GM13977 (cell line): ENCODE measurements at regions of chr4 and their contacts with region 1.

Region 1: DNA sequence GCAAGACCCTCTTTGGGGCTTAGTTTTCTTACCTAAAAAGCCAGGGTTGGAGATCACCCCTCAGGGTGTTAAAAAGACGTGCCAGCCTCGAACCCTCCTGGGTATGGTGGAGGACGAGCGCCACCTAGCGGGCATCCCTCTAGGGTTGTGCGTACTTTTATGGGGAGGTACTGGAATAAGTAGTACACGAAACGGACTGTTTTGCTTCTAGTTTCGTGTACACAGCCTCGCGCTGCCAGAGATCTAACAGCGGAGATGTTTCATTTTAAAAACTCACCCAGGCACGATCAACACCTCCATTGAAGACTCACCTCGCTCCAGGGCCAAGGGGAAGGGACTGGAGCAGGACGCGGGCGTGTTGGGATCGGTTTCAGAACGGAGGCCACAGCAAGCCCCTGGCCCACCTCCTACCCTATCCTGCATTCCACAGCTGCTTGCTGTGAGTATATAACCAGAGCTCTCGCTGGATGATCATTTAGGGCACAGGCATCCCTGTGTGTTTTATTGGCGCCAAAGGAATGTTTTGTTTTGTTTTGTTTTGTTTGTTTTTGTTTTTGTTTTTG is 4.8 kb upstream of the NKX3-2 start:
- DNase-seq: peak; percentile 91
- CTCF ChIP-seq: peak; percentile 83

Region 2: DNA sequence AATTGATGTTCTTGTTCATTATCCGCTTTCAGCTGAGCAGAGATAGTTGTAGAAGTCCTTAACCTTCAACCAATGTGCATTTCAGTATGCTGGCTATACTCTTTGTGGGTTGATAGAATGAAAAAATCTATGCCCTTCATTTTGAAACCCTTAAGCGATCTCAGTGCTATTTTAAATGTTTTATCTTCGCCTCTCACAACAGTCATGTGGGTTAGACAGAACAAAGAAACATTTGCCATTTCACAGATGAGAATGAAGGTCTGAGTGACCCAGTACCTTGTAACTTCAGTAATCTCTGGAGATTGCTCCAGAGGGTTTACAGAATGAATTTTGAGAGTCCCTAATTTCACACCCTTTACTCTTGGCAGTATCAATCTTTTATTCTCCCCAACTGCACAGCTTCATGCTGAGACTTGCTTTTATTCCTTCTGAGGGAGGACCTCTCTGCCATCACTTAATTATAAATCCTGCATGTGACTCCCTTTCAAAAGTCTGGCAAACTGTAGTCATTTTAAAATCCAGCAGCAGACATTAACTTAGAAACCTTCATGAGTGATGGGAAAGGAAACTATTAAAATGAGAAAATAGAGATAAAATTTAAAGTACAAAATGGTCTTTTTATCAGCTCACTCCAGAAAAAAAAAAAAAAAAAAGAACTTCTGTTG is 986.5 kb before region 1 on chr4:
- in situ Hi-C with region 1: no loop called
- DNase-seq: no peak
- CTCF ChIP-seq: no peak

Region 3: GRCh38 chr4:12734586-12734985 is 814.5 kb before region 1 on chr4:
- in situ Hi-C with region 1: loop called (anchors 10 kb)
- DNase-seq: no peak
- CTCF ChIP-seq: no peak

Region 4: DNA sequence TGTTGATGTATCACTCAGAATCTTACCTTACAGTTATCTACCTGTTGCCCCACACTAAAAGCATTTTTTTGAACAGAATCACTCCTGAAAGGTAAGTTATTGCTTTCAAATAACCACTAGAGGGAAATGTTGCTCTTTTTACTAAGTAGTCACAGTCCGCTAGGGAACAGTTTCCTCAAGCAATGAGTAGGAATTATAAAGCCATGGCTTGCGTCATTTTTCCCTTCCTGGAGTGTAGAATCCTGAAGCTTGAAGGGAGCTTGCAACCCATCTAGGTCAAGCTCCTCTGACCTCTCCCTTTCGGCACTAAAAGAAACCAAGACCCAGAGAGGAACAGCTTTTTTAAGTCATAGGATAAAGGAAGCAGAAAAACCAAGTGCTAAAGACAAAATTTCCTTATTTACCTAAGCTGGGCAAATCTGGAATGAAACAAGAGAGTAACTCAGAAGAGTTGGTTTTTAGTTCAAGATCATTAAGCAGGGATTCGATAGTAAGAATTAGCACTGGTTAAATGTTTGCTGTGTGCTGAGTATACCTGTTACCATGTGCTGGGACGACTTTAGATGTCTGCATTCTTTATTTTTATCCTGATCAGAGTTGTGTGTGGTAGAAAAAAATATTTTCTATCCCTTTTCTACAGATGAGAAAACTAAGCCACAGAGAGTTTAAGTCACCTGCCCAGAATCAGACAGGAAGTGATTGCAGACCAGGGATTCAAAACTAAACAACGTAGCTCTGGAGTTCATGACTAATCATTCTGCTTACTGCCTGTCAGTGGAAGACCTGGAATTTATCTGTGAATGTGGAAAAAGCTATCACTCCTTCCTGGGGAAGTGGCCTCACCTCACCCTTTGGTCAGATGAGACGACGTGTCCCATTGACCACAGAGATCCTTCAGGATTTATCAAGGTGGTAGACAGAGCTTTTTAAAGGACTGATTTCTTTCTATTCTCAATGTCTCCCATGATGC is 696.4 kb before region 1 on chr4:
- in situ Hi-C with region 1: loop called (anchors 5 kb)
- DNase-seq: peak; percentile 30
- CTCF ChIP-seq: peak; percentile 55

Region 5: DNA sequence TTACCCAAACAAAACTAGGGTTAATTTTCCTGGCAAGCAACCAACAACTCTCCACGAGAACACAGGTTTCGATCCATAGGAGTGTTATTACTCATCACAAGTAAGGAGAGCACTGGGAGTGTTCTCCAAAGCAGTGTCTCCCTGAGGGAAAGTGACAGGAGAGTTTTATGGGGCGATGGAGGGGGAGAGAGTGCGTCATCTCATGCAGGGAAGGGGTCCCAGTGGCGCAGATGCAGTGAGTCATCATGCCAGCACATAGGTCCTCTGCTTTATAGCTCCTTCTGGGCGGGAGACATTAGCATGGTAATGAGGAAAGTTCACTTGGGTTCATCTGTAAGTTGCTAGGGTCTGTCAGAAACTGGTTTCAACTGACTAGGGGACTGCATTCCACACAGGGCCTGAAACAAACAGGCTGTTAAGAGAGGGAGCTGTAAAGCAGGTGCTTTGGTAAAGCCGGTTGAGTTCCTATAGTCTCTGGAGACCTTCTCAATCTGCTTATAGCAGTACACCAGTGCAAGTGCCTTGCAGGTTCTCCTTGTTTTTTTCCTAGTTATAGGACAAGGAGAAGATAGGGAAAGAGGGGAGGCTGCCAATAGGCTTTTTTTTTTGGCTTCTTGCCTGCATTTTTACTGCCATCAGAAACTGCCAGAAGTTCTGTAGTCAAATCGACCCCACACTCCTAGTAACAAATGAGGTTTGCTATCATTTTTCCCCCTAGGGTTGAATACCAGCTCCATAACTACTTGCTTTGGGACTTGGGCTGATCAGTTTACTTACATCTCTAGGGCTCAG is 91.3 kb after region 1 on chr4:
- in situ Hi-C with region 1: no loop called
- DNase-seq: no peak
- CTCF ChIP-seq: no peak

Region 6: DNA sequence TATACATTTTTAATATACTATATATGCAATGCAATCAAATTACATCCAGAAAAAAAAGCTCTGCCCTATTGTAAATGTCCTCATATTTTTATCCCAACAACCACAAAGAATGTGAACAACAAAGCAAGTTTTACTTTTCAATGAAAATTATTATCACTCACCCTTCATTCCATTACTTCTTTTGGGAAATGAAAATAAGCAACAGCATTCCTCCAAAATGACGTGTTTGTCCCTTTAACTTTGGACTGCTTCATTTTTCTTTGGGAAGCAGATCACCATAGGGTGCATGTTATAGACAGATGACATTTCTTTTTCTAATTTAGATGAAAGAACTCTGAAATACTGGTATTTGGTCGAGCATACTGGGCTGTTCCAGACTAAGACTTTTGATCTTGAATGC is 745.5 kb after region 1 on chr4:
- in situ Hi-C with region 1: no loop called
- DNase-seq: no peak
- CTCF ChIP-seq: no peak